ENCODE measurements at regions of chr16 and their contacts with region 1.

Region 1: DNA sequence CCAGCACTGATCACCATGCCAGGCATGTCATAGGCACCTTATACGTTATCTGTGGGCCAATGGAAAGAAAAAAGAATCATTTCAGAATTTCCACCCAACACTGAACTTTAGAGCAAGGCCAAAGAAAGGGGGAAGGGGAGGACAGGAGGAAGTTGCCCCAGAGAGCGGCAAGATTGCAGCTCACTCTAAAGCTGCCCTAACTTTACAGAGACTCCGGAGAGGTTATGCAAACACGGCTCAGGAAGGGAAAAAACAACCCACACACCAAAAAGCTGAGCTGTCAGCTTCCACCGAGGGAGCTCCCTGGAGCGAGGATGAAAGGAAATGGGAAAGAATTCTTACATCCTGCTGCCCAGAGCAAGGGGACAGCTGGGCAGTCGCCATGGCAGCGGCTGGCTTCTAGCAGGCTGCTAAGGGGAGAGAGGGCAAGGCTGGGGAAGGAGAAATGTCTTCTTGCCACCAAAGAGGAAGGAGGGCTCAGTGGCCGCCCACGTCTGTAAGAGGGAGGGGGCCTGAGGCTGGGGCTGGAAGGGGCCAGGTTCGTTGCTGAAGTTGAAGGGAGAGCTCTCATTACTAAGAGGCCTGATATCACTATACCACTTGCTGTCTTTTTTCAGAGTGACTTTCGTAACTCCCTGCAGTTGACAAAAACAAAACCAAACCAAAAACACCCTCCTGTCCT is 18.2 kb downstream of the COTL1 start:
- DNase-seq: peak; percentile 83
- ATAC-seq: peak; percentile 21
- H3K4me3 Mint-ChIP-seq: peak overlapping the region; percentile 77
- H3K27ac Mint-ChIP-seq: peak overlapping the region; percentile 97
- H3K4me1 Mint-ChIP-seq: peaks cover 87% of the 10 kb centered on the region
- H3K27me3 Mint-ChIP-seq: no peaks in the 10 kb centered on the region

Region 2: GRCh38 chr16:84555418-84556195 is 44.1 kb before region 1 on chr16:
- CTCF ChIA-PET with region 1: interaction called, 39 read pairs
- DNase-seq: no peak
- ATAC-seq: no peak
- H3K4me3 Mint-ChIP-seq: peak overlapping the region; percentile 8
- H3K27ac Mint-ChIP-seq: peak overlapping the region; percentile 92
- H3K4me1 Mint-ChIP-seq: peaks cover 38% of the 10 kb centered on the region
- H3K27me3 Mint-ChIP-seq: no peaks in the 10 kb centered on the region

Measured in activated CD8-positive, alpha-beta memory T cell treated with anti-CD3 and anti-CD28 coated beads, Interleukin-2, amount 10 ng/mL, durations not matched to agents 7 days and 5 days (primary cell).